Pancreas (tissue), 10 donors: ENCODE measurements at regions of chr6 and their contacts with region 1.

Region 1: DNA sequence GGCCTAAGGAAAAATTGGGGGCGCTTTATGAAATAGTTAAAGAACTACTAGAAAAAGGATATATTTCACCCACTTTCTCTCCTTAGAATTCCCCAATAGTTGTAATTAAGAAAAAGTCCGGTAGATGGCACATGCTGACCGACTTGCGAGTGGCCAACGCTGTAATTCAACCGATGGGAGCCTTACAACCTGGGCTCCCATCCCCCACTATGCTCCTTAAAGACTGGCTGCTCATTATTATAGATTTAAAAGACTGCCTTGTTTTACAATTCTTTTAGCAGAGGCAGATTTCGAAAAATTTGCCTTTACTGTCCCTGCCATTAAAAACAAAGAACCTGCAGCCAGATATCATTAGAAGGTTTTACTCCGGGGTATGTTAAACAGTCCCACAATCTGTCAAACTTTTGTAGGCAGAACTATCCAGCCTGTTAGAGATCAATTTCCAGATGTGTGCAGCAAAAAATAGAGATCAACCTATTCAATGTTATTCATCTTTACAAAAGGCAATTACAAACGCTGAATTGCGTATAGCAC is 58.5 kb upstream of the PRSS16 start:
- DNase-seq: peak in 4 of 6 donors; percentile 46 to 72 (median 66)
- ATAC-seq: peak; percentile 91 to 99 (median 98)
- H3K4me3 ChIP-seq: peak overlapping the region; percentile 24 to 73 (median 51)
- H3K27ac ChIP-seq: peak overlapping the region in 2 of 4 donors; percentile 62 to 75
- H3K4me1 ChIP-seq: no peaks in the 10 kb centered on the region
- H3K27me3 ChIP-seq: no peaks in the 10 kb centered on the region
- CTCF ChIP-seq: peak; percentile 39 to 65 (median 55)

Region 2: GRCh38 chr6:27893059-27893835 is 704.3 kb after region 1 on chr6:
- intact Hi-C with region 1: loop called in 2 of 3 experiments (anchors 10 kb)
- DNase-seq: peak; percentile 62 to 84 (median 77)
- ATAC-seq: peak; percentile 71 to 79 (median 75)
- H3K4me3 ChIP-seq: peak overlapping the region; percentile 33 to 64 (median 55)
- H3K27ac ChIP-seq: peak overlapping the region in 3 of 4 donors; percentile 23 to 57 (median 52)
- H3K4me1 ChIP-seq: peaks cover 0 to 13% (median 0%) of the 10 kb centered on the region in 3 donors
- H3K27me3 ChIP-seq: peaks cover 0 to 5% (median 0%) of the 10 kb centered on the region in 4 donors
- CTCF ChIP-seq: no peak